PC-3 (cell line): ENCODE measurements at regions of chr10 and their contacts with region 1.

Region 1: GRCh38 chr10:62302760-62303159 is 34.1 kb upstream of the RTKN2 start:
- DNase-seq: peak; percentile 41
- ATAC-seq: 0 out of 2 replicates have a peak, but pooled peaks have one; percentile 33
- H3K4me3 ChIP-seq: no peak overlapping the region
- H3K27ac ChIP-seq: no peak overlapping the region
- H3K4me1 ChIP-seq: peaks cover 18% of the 10 kb centered on the region
- H3K27me3 ChIP-seq: no peaks in the 10 kb centered on the region
- CTCF ChIP-seq: no peak

Region 2: GRCh38 chr10:62278441-62278910 is 24.3 kb before region 1 on chr10:
- CTCF ChIA-PET with region 1: no interaction called
- POLR2A ChIA-PET with region 1: no interaction called
- intact Hi-C with region 1: loop called (anchors 2 kb)
- DNase-seq: peak; percentile 28
- ATAC-seq: peak; percentile 15
- H3K4me3 ChIP-seq: no peak overlapping the region
- H3K27ac ChIP-seq: no peak overlapping the region
- H3K4me1 ChIP-seq: no peaks in the 10 kb centered on the region
- H3K27me3 ChIP-seq: no peaks in the 10 kb centered on the region
- CTCF ChIP-seq: no peak